MCF 10A (cell line): ENCODE measurements at regions of chr14 and their contacts with region 1.

Region 1: GRCh38 chr14:50860478-50861086 is 11.3 kb upstream of the ABHD12B start:
- DNase-seq: peak; percentile 79
- H3K4me3 Mint-ChIP-seq: peak overlapping the region; percentile 82
- H3K27ac Mint-ChIP-seq: peak overlapping the region; percentile 49
- H3K4me1 Mint-ChIP-seq: no peaks in the 10 kb centered on the region
- H3K27me3 Mint-ChIP-seq: no peaks in the 10 kb centered on the region
- CTCF ChIP-seq: peak; percentile 68

Region 2: DNA sequence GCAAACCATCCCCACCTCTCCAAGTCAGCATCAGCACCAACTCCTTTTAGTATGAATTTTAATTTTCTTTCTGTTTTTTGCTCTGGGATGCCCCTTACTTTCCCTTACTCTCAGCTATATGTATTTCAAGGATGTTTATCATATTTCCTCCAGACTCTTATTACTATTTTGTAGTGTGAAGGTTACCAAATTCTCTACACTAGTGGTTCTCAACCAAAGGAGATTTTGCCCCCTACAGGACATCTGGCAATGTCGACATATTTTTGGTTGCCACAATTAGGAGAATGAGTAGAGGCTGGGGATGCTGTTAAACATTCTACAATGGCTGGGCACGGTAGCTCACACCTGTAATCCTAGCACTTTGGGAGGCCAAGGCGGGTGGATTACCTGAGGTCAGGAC is 600.1 kb before region 1 on chr14:
- CTCF ChIA-PET with region 1: no interaction called
- POLR2A ChIA-PET with region 1: no interaction called
- intact Hi-C with region 1: no loop called
- DNase-seq: peak; percentile 52
- H3K4me3 Mint-ChIP-seq: no peak overlapping the region
- H3K27ac Mint-ChIP-seq: no peak overlapping the region
- H3K4me1 Mint-ChIP-seq: no peaks in the 10 kb centered on the region
- H3K27me3 Mint-ChIP-seq: no peaks in the 10 kb centered on the region
- CTCF ChIP-seq: peak; percentile 27

Region 3: GRCh38 chr14:50497351-50497750 is 363.2 kb before region 1 on chr14:
- CTCF ChIA-PET with region 1: no interaction called
- POLR2A ChIA-PET with region 1: no interaction called
- intact Hi-C with region 1: no loop called
- DNase-seq: no peak
- H3K4me3 Mint-ChIP-seq: no peak overlapping the region
- H3K27ac Mint-ChIP-seq: no peak overlapping the region
- H3K4me1 Mint-ChIP-seq: peaks cover 13% of the 10 kb centered on the region
- H3K27me3 Mint-ChIP-seq: no peaks in the 10 kb centered on the region
- CTCF ChIP-seq: no peak

Region 4: DNA sequence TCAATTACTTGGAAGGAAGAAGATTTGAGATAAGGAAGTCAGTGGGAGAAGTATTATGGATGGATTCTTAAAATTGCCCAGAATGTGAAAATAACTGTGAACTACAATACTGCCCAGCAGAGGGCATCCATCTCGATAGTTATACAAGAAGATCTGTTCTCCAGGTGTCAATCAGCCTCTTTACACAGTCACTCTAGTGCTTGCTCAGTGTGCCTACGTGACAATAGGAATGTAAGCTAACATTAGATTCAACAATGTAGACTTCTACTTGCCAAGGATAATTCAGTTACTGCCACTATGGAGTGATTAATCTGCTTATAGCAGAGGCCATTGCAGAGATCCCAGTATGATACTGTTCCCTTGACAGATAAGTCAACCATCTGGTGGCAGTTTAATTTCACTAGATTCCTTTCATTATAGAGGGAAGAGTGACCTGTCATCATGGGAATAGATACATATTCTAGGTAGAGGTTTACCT is 317.6 kb before region 1 on chr14:
- CTCF ChIA-PET with region 1: interaction called, 9 read pairs
- POLR2A ChIA-PET with region 1: no interaction called
- intact Hi-C with region 1: loop called (anchors 1 kb)
- DNase-seq: peak; percentile 64
- H3K4me3 Mint-ChIP-seq: no peak overlapping the region
- H3K27ac Mint-ChIP-seq: no peak overlapping the region
- H3K4me1 Mint-ChIP-seq: peaks cover 19% of the 10 kb centered on the region
- H3K27me3 Mint-ChIP-seq: no peaks in the 10 kb centered on the region
- CTCF ChIP-seq: peak; percentile 61

Region 5: DNA sequence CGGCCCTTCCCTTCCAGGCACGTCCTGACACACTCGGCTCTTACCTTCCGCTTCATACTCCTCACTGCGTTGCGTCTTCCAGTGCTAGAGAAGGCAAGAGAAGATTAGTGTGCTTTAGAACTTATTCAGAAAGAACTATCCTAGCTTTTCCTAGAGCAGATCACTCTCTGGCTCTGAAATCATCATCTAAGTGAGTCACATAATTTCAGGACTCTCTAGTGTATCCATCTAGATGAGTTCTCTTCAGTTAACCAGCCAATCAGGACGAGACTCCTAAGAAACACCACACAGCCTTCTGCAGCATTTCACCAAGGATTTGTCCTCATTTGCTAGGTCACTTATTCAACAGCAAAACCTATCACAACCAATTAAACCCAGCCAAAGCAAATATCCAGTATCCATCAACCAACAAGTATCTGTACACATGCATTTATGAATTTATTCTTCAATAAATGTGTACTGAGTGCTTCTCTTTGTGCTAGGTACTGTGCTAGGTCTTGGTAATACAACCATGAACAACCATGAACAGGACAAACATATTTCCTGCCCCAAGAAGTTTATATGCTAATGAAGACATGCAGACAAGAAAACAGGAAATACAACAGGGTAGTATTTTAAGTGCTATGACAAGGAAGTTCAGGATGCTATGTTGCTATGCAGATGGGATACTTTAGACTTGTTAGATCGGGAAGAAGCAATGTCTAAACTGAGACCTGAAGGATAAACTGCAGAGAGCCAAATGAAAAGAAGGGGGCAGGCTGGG is 81.7 kb before region 1 on chr14:
- CTCF ChIA-PET with region 1: interaction called, 101 read pairs
- POLR2A ChIA-PET with region 1: interaction called, 9 read pairs
- intact Hi-C with region 1: loop called (anchors 1 kb)
- DNase-seq: no peak
- H3K4me3 Mint-ChIP-seq: no peak overlapping the region
- H3K27ac Mint-ChIP-seq: peak overlapping the region; percentile 22
- H3K4me1 Mint-ChIP-seq: peaks cover 29% of the 10 kb centered on the region
- H3K27me3 Mint-ChIP-seq: no peaks in the 10 kb centered on the region
- CTCF ChIP-seq: no peak

Region 6: GRCh38 chr14:50823051-50823761 is 37.4 kb before region 1 on chr14:
- CTCF ChIA-PET with region 1: interaction called, 54 read pairs
- POLR2A ChIA-PET with region 1: interaction called, 7 read pairs
- intact Hi-C with region 1: no loop called
- DNase-seq: no peak
- H3K4me3 Mint-ChIP-seq: no peak overlapping the region
- H3K27ac Mint-ChIP-seq: no peak overlapping the region
- H3K4me1 Mint-ChIP-seq: peaks cover 19% of the 10 kb centered on the region
- H3K27me3 Mint-ChIP-seq: no peaks in the 10 kb centered on the region
- CTCF ChIP-seq: no peak

Region 7: GRCh38 chr14:50846226-50846880 is 14.2 kb before region 1 on chr14:
- CTCF ChIA-PET with region 1: interaction called, 22 read pairs
- POLR2A ChIA-PET with region 1: interaction called, 6 read pairs
- intact Hi-C with region 1: no loop called
- DNase-seq: peak; percentile 35
- H3K4me3 Mint-ChIP-seq: no peak overlapping the region
- H3K27ac Mint-ChIP-seq: no peak overlapping the region
- H3K4me1 Mint-ChIP-seq: peaks cover 7% of the 10 kb centered on the region
- H3K27me3 Mint-ChIP-seq: no peaks in the 10 kb centered on the region
- CTCF ChIP-seq: no peak